ENCODE measurements at regions of chr7 and their contacts with region 1.

Region 1: DNA sequence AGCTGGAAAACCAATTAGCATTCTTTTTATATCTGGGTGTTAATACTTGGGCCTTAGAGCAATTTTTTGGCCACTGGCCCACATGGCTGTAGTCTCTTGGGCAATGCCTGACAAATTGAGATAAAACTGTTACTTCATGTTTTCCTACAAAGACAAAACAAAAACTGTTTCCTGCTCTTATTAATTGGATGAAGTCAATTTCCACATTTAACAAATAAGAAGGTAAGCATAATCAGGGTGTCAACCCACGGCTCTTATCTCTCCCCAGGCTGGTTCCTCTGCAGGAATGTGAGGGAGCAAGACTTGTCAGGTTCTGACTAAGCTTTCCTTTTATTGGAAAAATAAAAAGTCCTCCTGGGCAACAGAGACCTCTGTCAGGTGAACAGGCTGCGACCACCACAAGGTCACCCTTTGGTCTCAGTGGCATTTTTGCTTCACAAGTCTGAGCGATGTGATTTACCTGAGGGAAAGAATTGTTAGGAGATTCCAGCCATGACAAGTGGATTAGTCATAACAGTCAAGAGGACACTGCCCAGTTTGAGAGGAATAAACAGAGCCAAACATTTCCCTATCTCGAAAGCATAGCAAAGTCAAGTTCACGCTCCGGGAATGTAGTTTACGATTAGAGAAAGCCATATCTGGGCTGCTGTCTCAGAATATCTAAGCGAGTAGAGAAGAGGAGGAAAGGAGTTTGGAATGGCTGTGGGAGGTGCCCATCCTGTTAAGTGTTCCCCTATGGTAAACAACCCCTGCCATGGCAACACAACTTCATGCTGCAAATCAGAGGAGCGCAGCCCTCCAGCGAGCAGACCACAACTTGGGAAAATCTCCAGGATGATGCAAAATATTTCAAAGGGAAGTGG is 144.4 kb downstream of the TES start:
- DNase-seq: peak; percentile 62 to 81
- ATAC-seq: peak; percentile 82
- H3K4me3 ChIP-seq: peak overlapping the region in 1 of 2 donors; percentile 21
- H3K27ac ChIP-seq: peak overlapping the region; percentile 89 to 90
- H3K4me1 ChIP-seq: peaks cover 7 to 15% of the 10 kb centered on the region in 2 donors
- H3K27me3 ChIP-seq: no peaks in the 10 kb centered on the region

Region 2: GRCh38 chr7:116271963-116272839 is 82.6 kb before region 1 on chr7:
- intact Hi-C with region 1: loop called in 1 of 2 experiments (anchors 5 kb)
- DNase-seq: peak in 1 of 2 donors; percentile 50
- ATAC-seq: peak; percentile 90
- H3K4me3 ChIP-seq: no peak overlapping the region
- H3K27ac ChIP-seq: peak overlapping the region; percentile 76 to 97
- H3K4me1 ChIP-seq: peaks cover 3 to 14% of the 10 kb centered on the region in 2 donors
- H3K27me3 ChIP-seq: no peaks in the 10 kb centered on the region

Region 3: DNA sequence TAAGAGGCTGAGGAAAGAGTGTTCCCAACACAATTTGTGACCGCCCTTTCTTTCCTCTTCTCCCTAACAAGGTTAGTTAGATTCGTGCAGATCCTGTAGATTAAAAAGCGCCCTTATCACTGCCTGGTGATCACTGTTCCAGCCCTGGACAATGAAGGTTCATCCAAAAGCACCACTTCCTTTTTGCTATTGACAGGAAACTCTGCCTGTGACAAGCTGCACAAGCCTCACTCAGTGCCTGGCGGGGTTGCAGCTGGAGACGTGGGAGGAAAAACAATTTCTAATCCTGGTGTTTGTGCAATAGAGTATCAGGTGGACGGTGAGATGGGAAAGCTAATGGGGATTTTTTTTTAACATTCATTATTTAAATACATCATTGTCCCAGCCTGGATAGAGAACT is 38.9 kb after region 1 on chr7:
- intact Hi-C with region 1: loop called in 1 of 2 experiments (anchors 5 kb)
- DNase-seq: no peak
- ATAC-seq: peak; percentile 58
- H3K4me3 ChIP-seq: no peak overlapping the region
- H3K27ac ChIP-seq: no peak overlapping the region
- H3K4me1 ChIP-seq: peaks cover 0 to 1% of the 10 kb centered on the region in 2 donors
- H3K27me3 ChIP-seq: no peaks in the 10 kb centered on the region

Region 4: GRCh38 chr7:116443101-116443523 is 88.3 kb after region 1 on chr7:
- intact Hi-C with region 1: no loop called
- DNase-seq: no peak
- ATAC-seq: peak; percentile 27
- H3K4me3 ChIP-seq: no peak overlapping the region
- H3K27ac ChIP-seq: no peak overlapping the region
- H3K4me1 ChIP-seq: peaks cover 1 to 12% of the 10 kb centered on the region in 2 donors
- H3K27me3 ChIP-seq: no peaks in the 10 kb centered on the region